ENCODE measurements at regions of chr12 and their contacts with region 1.

Region 1: GRCh38 chr12:11836282-11837151 is 187.0 kb downstream of the ETV6 start:
- DNase-seq: peak in 1 of 2 donors; percentile 83
- ATAC-seq: no peak
- H3K4me3 ChIP-seq: no peak overlapping the region
- H3K27ac ChIP-seq: peak overlapping the region in 1 of 2 donors; percentile 8
- H3K4me1 ChIP-seq: peaks cover 11 to 27% of the 10 kb centered on the region in 2 donors
- H3K27me3 ChIP-seq: no peaks in the 10 kb centered on the region

Region 2: DNA sequence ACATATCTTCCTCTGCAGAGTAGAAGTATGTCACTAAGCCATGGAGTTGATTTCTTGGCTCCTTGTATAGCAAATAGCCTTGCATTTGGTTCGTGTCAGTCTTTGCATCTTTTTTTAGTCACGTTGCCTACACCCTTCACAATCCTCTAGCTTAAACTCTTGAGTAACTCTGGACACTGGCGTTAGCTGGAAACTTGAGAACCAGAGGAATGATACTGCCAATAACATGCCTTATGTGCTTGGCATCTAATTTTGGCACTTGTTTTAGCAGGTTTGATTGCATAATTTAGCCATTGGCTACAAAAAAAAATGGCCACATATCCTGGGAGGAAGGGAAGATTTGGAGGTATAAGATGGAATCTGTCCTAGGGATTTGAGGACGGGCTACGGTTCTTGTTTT is 50.8 kb before region 1 on chr12:
- intact Hi-C with region 1: loop called in 1 of 2 experiments (anchors 5 kb)
- DNase-seq: no peak
- ATAC-seq: peak; percentile 50
- H3K4me3 ChIP-seq: no peak overlapping the region
- H3K27ac ChIP-seq: peak overlapping the region in 1 of 2 donors; percentile 7
- H3K4me1 ChIP-seq: peaks cover 3 to 6% of the 10 kb centered on the region in 2 donors
- H3K27me3 ChIP-seq: no peaks in the 10 kb centered on the region

Region 3: DNA sequence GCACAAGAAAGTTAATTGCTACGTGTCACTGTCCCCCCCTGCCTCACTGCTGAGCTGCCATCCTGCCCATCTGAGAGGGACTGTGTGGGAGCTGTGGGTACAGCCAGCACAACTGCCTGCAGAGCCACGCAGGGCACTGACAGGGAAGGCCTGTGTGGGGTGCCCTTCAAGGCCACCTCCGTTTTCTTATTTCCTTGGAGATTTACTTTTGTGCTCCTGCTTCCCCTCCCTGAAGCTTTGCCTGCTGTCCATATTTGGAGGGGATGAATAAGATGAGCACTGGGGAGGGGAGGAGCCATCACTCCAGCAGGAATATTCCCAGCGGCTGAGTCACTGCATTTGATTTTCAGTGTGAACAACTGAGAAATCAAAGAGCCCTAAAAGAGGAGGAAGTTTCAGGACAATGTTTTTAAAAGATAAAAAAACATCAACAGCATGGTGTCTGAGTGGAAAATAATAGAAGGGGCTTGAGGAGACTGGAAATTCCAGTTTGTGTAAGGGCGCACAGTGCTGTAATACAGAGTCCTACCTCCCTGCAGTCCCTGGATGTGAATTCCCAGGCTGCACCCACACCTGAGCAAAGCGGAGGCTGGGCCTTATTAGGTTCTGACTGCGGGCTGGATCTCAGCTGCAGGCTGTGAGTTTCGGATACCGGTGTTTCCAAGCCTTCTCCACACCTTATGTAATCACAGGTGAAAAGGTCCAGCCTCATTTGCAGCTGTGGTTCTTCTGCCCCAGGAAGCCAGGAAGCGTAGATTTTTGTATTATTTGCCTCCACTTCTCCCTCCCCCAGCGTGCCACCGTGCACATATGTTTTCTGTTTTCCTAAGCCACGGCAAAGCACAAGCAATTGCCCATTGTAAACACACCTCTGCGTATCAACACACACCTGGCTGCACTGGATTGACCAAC is 41.6 kb after region 1 on chr12:
- intact Hi-C with region 1: loop called in 1 of 2 experiments (anchors 5 kb)
- DNase-seq: peak in 1 of 2 donors; percentile 62
- ATAC-seq: peak; percentile 76
- H3K4me3 ChIP-seq: no peak overlapping the region
- H3K27ac ChIP-seq: peak overlapping the region in 1 of 2 donors; percentile 31
- H3K4me1 ChIP-seq: peaks cover 0 to 5% of the 10 kb centered on the region in 2 donors
- H3K27me3 ChIP-seq: no peaks in the 10 kb centered on the region

Region 4: DNA sequence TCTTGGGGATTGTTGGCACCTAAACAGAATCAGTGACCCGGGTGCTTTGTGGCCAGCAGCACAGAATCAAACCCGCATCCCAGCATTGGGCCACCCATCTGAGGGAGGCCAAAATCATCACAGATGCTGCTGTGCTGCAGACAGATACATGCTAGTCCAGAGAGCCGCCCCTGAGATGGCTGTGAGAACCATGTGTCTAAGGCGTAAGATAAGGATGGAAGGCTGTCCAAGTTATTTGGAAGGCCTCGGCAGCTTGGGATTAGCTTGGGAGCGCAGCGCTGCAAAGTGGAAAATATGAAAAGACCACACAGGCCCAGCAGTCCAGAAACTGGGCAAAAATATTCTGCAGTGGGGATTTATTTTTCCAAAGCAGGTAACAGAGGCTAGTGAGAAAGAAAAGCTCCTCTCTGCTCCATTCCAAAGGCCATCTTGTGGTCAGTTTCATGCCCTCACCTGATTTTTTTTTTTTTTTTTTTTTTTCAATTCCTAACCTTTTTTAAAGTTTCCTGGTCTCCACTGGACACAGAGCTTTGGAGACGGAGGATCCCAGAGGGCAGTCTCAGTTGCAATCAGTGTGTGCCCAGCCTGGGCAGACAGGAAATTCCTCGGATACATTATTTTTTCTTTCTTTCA is 55.4 kb after region 1 on chr12:
- intact Hi-C with region 1: loop called in 1 of 2 experiments (anchors 5 kb)
- DNase-seq: peak in 1 of 2 donors; percentile 55
- ATAC-seq: peak; percentile 75
- H3K4me3 ChIP-seq: no peak overlapping the region
- H3K27ac ChIP-seq: peak overlapping the region; percentile 19 to 63
- H3K4me1 ChIP-seq: peaks cover 0 to 9% of the 10 kb centered on the region in 2 donors
- H3K27me3 ChIP-seq: no peaks in the 10 kb centered on the region

Measured in aorta (tissue), 5 donors.